Thyroid gland (tissue), 4 donors: ENCODE measurements at regions of chr18 and their contacts with region 1.

Region 1: DNA sequence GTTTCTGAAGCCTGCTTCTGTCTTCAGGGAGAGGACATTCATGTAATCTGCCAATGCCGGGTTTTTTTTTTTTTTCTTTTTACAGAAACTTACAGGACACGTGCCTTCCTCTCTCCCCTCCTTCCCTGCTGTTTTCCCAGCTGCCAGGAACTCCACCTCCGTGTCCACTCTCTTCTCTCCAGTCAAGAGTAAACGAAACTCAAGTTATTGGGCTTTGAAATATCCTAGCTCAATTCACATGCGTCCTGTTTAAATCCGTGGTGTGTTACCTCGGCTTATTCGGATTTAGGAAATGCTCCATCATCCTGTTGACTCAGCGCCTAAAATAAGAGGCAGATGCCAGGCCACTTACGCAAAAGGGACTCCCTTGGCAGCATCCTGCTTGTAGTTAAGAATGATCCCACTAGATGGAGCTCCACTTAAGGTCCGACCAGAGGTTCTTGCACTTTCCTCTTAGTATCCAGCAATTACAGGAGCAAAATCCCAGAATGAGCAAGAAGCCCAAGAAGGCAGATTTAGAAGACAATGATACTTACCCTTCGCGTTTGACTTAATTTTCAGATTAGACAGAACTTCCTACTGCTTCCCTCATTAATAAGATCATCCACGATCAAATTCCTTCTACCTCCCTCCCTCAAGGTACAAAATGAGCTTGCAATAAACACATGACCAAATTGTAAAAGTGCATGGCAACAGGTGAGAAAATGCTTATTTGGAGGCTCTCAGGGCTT is 97.2 kb upstream of the ZCCHC2 start:
- DNase-seq: peak; percentile 78 to 80
- H3K4me3 ChIP-seq: peak overlapping the region in 1 of 3 donors; percentile 4
- H3K27ac ChIP-seq: peak overlapping the region; percentile 35 to 88 (median 75)
- H3K4me1 ChIP-seq: peaks cover 4 to 12% of the 10 kb centered on the region in 2 donors
- H3K27me3 ChIP-seq: no peaks in the 10 kb centered on the region
- CTCF ChIP-seq: peak; percentile 59 to 96 (median 88)
- POLR2A ChIP-seq: peak in 1 of 2 donors; percentile 18

Region 2: DNA sequence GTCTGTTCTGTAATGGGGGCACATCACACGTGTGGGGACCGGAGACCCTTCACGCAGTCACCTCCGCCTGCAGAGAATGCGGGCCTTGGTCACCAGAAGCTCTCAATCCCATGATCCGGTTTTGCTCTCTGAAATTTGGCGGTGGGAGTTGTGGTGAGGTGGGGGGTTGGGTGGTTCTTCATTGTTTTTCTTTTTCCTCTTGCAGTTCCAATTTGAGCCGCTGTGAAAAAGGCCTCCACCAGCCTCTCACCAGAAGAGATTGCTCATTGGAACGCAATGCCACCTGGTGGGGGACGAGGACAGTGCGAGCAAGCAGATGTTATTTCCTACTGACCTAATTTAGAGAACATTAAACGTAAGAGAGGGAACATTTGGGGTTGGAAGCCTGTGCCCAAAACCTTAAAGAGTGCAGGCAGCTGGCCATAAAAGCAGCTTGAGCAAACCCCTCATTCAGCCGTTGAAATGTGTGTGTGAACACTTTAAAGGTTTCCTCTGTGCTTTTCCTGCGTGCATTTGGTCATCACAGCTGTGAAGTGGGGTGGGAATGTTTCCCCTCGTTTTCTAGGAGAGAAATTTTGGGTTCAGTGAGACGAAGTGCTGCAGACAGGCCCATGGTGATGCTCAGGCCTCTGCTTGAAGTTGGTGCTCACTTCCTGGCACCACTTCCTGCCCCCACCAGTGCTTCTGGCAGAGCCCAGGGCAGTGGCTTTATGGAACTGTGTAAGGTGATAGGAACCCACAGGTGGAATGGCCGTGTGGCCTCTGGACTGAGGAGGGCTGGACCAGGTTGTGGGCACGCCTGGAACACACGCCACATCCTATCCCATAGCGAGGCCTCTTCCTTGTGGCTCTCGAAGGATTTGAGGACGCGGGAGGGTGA is 158.9 kb after region 1 on chr18:
- intact Hi-C with region 1: loop called (anchors 5 kb)
- DNase-seq: peak; percentile 85 to 90
- H3K4me3 ChIP-seq: no peak overlapping the region
- H3K27ac ChIP-seq: peak overlapping the region in 1 of 3 donors; percentile 5
- H3K4me1 ChIP-seq: peaks cover 4 to 16% of the 10 kb centered on the region in 2 donors
- H3K27me3 ChIP-seq: no peaks in the 10 kb centered on the region
- CTCF ChIP-seq: peak; percentile 92 to 100 (median 98)
- POLR2A ChIP-seq: no peak